Activated naive CD4-positive, alpha-beta T cell treated with anti-CD3 and anti-CD28 coated beads for 36 hours (primary cell): ENCODE measurements at regions of chr13 and their contacts with region 1.

Region 1: DNA sequence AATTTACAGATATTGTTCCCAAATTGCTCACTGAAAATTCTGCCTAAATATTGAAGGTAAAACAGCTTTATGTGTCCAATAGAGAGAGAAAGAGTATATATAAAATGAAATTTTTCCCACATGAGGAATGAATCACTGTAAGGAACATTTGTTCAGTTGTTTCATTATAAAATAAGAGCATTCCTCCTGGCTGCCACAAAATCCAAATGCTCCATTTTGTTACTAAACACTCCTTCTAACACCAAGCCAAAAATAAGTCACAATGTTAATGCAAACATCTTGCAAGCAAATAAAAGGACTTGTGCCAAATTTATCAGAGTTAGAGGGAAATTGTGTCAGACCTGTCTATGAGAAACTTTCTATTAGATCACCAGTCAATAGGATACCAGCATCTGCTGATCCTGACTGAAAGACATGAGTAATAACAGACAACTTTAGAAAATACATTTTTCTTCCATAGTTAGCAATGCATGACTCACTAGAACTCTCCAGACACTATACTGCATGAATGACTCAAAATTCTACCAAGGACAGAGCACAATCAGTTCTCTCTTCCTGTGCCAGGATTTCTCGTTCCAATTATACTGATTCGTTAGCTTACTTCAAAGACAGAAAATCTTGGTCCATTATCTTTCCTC is 83.5 kb upstream of the FNDC3A start:
- DNase-seq: no peak
- H3K4me3 Mint-ChIP-seq: no peak overlapping the region
- H3K27ac Mint-ChIP-seq: peak overlapping the region; percentile 39
- H3K4me1 Mint-ChIP-seq: peaks cover 32% of the 10 kb centered on the region
- H3K27me3 Mint-ChIP-seq: peaks cover 2% of the 10 kb centered on the region

Region 2: GRCh38 chr13:48653472-48653939 is 238.7 kb before region 1 on chr13 and contains the start of gene CYSLTR2:
- CTCF ChIA-PET with region 1: no interaction called
- intact Hi-C with region 1: loop called (anchors 5 kb)
- DNase-seq: peak; percentile 27
- H3K4me3 Mint-ChIP-seq: peak within 1 kb of the TSS; percentile 75
- H3K27ac Mint-ChIP-seq: peak within 1 kb of the TSS; percentile 82
- H3K4me1 Mint-ChIP-seq: peaks cover 29% of the 10 kb centered on the region
- H3K27me3 Mint-ChIP-seq: no peaks in the 10 kb centered on the region
- total RNA-seq, gene CYSLTR2: 1.3 to 1.7 TPM

Region 3: DNA sequence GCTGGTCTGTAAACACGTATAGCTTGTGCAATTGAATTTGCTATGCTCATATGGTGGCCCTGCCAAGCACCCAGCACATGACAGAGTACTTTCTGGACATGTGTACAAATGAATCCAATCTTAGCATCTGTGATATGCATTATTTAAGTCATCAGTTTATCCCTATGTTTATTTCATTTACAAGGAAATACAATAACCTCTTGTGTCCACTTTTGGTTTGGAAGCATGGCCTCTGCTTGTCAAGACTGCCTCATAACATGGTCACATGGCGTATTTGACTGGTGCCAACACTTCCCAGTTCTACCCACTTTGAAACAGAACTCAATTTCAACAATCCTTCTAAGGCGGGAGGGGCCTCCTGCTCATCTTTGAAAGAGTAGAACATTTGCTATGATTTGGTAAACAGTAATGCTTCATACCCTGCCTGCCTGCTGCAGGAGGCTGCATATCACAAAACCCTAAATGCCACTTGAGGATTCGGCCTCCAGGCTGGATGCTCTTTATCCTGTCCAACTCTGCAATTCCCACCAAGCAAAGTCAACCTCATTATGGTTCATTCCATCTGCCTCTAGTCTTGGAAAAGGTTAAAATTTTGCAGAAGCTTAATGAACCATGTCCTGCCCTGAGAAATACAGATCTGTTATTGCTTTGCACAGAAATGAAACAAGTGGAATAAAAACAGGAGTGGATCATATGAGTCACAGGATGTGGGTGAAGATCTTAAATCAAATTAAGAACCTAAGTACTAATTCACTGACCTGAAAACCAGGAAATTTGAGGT is 87.2 kb before region 1 on chr13:
- CTCF ChIA-PET with region 1: no interaction called
- intact Hi-C with region 1: loop called (anchors 1 kb)
- DNase-seq: peak; percentile 9
- H3K4me3 Mint-ChIP-seq: no peak overlapping the region
- H3K27ac Mint-ChIP-seq: no peak overlapping the region
- H3K4me1 Mint-ChIP-seq: peaks cover 27% of the 10 kb centered on the region
- H3K27me3 Mint-ChIP-seq: no peaks in the 10 kb centered on the region

Region 4: GRCh38 chr13:48859272-48860105 is 32.7 kb before region 1 on chr13:
- CTCF ChIA-PET with region 1: no interaction called
- intact Hi-C with region 1: loop called (anchors 1 kb)
- DNase-seq: no peak
- H3K4me3 Mint-ChIP-seq: no peak overlapping the region
- H3K27ac Mint-ChIP-seq: no peak overlapping the region
- H3K4me1 Mint-ChIP-seq: peaks cover 23% of the 10 kb centered on the region
- H3K27me3 Mint-ChIP-seq: no peaks in the 10 kb centered on the region

Region 5: DNA sequence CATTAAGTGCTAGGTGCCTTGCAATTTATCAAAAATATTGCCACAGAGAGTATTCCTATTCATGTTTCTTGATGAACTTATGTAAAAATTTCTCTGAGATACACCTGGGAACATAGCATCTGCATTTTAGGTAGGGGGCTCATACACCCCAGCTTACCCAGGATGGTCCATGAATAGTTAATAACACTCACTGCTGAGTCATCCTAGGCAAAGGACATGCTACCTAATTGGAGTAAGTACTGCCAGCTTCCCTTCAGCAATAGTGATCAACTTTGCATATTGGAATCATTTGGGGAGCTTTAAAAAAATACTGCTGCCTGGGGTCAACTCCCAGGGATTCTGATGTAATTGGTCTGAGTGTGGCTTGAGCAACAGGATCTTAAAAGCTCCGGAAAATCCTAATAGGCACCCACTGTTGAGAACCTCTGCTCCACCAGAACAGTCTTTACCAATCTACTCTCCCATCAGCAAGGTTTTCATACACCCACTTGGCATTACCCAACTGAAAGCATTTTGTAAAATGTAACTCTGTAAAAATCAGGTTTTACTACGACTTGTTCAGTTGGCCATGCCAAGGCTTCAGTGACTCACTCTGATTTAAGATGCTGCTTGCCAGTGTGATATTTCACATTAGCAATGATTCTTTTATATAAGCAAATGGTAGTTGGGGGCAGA is 16.3 kb after region 1 on chr13:
- CTCF ChIA-PET with region 1: no interaction called
- intact Hi-C with region 1: no loop called
- DNase-seq: no peak
- H3K4me3 Mint-ChIP-seq: no peak overlapping the region
- H3K27ac Mint-ChIP-seq: no peak overlapping the region
- H3K4me1 Mint-ChIP-seq: peaks cover 4% of the 10 kb centered on the region
- H3K27me3 Mint-ChIP-seq: peaks cover 7% of the 10 kb centered on the region

Region 6: DNA sequence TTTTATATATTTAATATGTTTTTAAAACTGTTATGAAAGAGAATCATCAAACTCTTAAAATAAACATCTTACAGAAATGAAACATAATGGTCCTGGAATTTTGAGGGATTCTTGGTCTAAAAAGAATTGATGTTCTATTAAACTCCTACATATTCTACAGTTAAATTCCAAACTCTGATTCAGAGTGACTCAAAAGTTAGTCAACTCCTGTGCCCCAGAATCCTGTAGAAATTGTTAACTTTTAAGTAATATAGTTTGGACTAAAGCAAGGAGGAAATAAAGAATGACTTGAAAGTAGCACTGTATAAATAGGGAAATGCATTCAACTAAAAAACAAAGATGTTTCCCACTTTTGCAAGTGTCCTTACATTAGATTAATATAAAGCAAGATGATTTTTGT is 131.3 kb after region 1 on chr13:
- CTCF ChIA-PET with region 1: no interaction called
- intact Hi-C with region 1: loop called (anchors 2 kb)
- DNase-seq: no peak
- H3K4me3 Mint-ChIP-seq: no peak overlapping the region
- H3K27ac Mint-ChIP-seq: no peak overlapping the region
- H3K4me1 Mint-ChIP-seq: peaks cover 30% of the 10 kb centered on the region
- H3K27me3 Mint-ChIP-seq: no peaks in the 10 kb centered on the region

Region 7: GRCh38 chr13:49540552-49540951 is 648.4 kb after region 1 on chr13:
- CTCF ChIA-PET with region 1: no interaction called
- intact Hi-C with region 1: no loop called
- DNase-seq: no peak
- H3K4me3 Mint-ChIP-seq: peak overlapping the region; percentile 16
- H3K27ac Mint-ChIP-seq: peak overlapping the region; percentile 38
- H3K4me1 Mint-ChIP-seq: peaks cover 21% of the 10 kb centered on the region
- H3K27me3 Mint-ChIP-seq: no peaks in the 10 kb centered on the region

Region 8: GRCh38 chr13:49836516-49836915 is 944.3 kb after region 1 on chr13:
- CTCF ChIA-PET with region 1: no interaction called
- intact Hi-C with region 1: no loop called
- DNase-seq: no peak
- H3K4me3 Mint-ChIP-seq: no peak overlapping the region
- H3K27ac Mint-ChIP-seq: no peak overlapping the region
- H3K4me1 Mint-ChIP-seq: no peaks in the 10 kb centered on the region
- H3K27me3 Mint-ChIP-seq: no peaks in the 10 kb centered on the region